ENCODE measurements at regions of chr1 and their contacts with region 1.

Region 1: DNA sequence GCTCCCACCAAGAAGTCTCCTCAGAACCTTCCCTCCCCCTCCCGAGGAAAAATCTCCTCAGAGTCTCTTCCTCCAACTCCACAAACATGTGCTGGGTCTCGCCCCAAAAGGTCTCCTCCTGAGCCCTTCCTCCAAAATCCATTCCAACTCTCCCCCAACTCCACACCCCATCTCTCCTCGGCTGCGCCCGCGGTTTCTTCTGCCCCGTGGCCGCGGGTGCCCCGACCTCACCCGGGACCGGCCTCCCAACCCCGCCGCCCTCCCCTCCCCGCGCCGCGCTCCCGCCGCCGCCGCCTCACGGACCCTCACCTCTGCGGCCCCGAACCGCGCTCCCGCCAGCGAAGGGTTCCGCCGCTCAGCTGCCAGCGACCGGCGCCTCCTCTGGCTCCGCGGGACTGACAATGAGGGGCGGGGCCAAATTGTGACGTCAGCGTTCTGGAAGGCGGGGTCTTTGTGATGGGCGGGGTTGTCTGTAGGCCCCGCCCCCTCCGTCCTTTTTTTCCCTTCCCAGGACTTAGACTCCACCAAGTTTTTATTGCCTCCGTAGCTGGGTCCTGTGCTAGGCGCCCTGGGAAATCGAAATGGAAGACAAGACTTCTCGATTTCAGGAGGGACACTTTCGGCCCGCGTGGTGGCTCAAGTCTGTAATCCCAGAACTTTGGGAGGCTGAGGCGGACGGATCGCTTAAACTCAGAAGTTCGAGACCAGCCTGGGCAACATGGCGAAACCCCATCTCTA is at the start of gene LUZP1:
- DNase-seq: peak; percentile 77 to 87 (median 80)
- H3K4me3 ChIP-seq: peak within 1 kb of the TSS; percentile 72 to 76
- H3K4me3 Mint-ChIP-seq: peak within 1 kb of the TSS; percentile 95 to 98 (median 97)
- H3K27ac ChIP-seq: peak within 1 kb of the TSS; percentile 73
- H3K27ac Mint-ChIP-seq: peak within 1 kb of the TSS; percentile 88 to 98 (median 96)
- H3K4me1 ChIP-seq: peaks cover 23% of the 10 kb centered on the region
- H3K4me1 Mint-ChIP-seq: peaks cover 19 to 51% (median 32%) of the 10 kb centered on the region in 4 donors
- H3K27me3 ChIP-seq: no peaks in the 10 kb centered on the region
- H3K27me3 Mint-ChIP-seq: no peaks in the 10 kb centered on the region
- total RNA-seq, gene LUZP1: 24.7 to 27.9 TPM

Region 2: DNA sequence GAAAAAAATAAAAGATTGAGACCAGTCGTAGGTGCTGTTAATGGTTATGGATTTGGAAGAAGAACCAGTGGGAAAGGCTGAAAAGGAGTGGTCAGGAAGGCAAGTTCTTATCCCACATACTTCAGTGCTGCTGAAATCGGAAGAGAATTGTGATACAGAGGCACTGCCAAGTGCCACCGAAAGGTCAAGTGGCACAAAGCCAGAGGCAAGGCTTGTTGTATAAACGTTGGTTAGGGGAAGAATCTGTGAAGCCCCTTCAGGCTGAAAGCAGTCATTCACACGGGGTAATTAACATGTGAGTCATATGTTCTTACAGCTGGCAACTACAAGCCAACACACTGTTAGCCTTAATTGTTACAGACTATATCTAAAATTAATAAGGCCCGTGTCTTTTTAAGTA is 668.2 kb before region 1 on chr1:
- CTCF ChIA-PET with region 1: no interaction called
- POLR2A ChIA-PET with region 1: no interaction called
- intact Hi-C with region 1: no loop called
- DNase-seq: no peak
- H3K4me3 ChIP-seq: no peak overlapping the region
- H3K4me3 Mint-ChIP-seq: no peak overlapping the region
- H3K27ac ChIP-seq: no peak overlapping the region
- H3K27ac Mint-ChIP-seq: peak overlapping the region in 1 of 7 donors; percentile 61
- H3K4me1 ChIP-seq: no peaks in the 10 kb centered on the region
- H3K4me1 Mint-ChIP-seq: peaks cover 0 to 5% (median 2%) of the 10 kb centered on the region in 4 donors
- H3K27me3 ChIP-seq: no peaks in the 10 kb centered on the region
- H3K27me3 Mint-ChIP-seq: no peaks in the 10 kb centered on the region

Region 3: DNA sequence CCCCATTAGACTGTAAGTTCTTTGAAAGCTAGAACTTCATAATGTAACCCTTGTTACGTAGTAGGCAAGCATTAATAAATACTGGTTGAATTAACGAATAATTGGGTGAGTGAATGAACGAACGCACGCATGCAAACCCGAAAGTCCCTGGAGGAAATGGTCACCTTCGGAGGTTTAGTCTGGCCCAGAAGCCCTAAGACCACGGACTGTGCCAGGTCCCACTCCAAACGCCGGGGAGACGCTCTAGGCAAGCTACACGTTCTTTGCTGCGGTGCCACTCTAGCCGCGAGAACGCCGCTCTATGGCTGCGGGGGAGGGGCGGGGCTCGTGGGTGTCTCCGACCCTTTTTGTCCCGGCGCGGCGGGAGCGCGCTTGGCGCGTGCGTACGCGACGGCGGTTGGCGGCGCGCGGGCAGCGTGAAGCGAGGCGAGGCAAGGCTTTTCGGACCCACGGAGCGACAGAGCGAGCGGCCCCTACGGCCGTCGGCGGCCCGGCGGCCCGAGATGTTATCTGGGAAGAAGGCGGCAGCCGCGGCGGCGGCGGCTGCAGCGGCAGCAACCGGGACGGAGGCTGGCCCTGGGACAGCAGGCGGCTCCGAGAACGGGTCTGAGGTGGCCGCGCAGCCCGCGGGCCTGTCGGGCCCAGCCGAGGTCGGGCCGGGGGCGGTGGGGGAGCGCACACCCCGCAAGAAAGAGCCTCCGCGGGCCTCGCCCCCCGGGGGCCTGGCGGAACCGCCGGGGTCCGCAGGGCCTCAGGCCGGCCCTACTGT is 149.3 kb before region 1 on chr1 and contains the start of gene KDM1A:
- CTCF ChIA-PET with region 1: no interaction called
- POLR2A ChIA-PET with region 1: interaction called, 3 read pairs
- intact Hi-C with region 1: loop called (anchors 5 kb)
- DNase-seq: peak; percentile 90 to 94 (median 92)
- H3K4me3 ChIP-seq: peak within 1 kb of the TSS; percentile 85 to 95
- H3K4me3 Mint-ChIP-seq: peak within 1 kb of the TSS; percentile 96 to 99 (median 97)
- H3K27ac ChIP-seq: peak within 1 kb of the TSS; percentile 61
- H3K27ac Mint-ChIP-seq: peak within 1 kb of the TSS; percentile 73 to 97 (median 94)
- H3K4me1 ChIP-seq: peaks cover 15% of the 10 kb centered on the region
- H3K4me1 Mint-ChIP-seq: peaks cover 28 to 56% (median 40%) of the 10 kb centered on the region in 4 donors
- H3K27me3 ChIP-seq: no peaks in the 10 kb centered on the region
- H3K27me3 Mint-ChIP-seq: no peaks in the 10 kb centered on the region
- total RNA-seq, gene KDM1A: 43.2 TPM

Region 4: DNA sequence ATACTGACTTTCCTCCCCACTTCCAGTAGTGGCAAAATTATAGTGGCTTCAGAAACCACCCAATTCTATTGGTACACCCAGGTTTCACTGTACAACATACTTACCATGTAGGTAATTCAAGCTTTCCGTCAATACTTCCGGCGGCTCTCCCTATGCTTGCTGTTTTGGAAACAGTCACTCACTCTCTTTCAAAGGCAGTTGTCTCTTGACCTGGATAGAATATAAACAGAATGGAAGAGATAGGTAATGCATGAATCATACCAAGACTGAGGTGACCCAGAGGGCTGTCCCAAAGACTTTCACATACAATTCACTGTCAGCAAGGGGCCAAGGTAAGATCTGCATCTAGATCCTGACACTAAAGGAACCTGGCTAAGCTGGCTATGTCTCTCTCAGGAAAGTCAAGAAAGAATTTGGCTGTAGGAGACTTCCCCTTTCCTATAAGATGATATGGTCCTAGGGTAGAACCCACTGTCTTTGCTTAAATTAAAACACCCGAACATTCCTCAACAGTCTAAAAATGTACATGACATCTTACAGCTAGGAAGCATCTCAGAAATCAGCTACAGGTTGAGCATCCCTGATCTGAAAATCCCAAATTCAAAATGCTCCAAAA is 59.6 kb before region 1 on chr1:
- CTCF ChIA-PET with region 1: interaction called, 4 read pairs
- POLR2A ChIA-PET with region 1: interaction called, 21 read pairs
- intact Hi-C with region 1: no loop called
- DNase-seq: peak in 1 of 5 donors; percentile 66
- H3K4me3 ChIP-seq: no peak overlapping the region
- H3K4me3 Mint-ChIP-seq: peak overlapping the region in 5 of 8 donors; percentile 2 to 74 (median 31)
- H3K27ac ChIP-seq: no peak overlapping the region
- H3K27ac Mint-ChIP-seq: peak overlapping the region in 6 of 7 donors; percentile 6 to 88 (median 62)
- H3K4me1 ChIP-seq: peaks cover 55% of the 10 kb centered on the region
- H3K4me1 Mint-ChIP-seq: peaks cover 38 to 73% (median 45%) of the 10 kb centered on the region in 4 donors
- H3K27me3 ChIP-seq: no peaks in the 10 kb centered on the region
- H3K27me3 Mint-ChIP-seq: no peaks in the 10 kb centered on the region

Region 5: DNA sequence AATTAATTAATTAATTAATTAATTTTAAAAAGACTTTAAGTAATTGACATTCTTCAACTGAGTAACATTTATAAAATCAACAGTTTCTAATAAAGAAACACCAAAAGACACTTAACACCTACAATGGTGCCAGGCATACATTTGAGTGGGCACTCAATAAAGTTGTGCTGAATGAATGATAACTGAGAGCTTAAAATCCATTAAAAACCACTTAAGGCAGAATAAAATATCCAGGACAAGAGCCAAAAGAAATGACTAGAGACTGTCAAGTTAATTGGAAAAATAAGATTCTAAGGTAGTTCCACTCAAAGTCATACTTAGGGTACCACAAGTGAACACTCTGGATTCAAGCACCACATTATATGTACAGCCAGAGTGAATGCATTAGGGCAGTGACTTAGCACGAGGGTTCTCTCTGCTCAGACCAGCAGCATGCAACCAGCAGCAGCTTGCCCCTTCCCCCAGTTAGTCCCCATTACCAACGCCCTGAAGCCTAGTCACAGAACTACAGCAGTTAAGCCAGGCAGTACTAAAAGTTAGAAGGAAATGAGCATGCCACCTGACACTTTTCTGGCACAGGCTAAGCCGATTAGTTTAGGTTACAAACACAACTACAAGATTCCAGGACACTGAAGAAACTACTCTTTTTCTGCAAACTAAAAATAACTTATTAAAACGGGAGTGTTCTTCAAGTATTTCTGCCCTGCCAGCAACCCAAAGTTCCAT is 46.4 kb before region 1 on chr1:
- CTCF ChIA-PET with region 1: interaction called, 4 read pairs
- POLR2A ChIA-PET with region 1: interaction called, 40 read pairs
- intact Hi-C with region 1: loop called (anchors 2 kb)
- DNase-seq: no peak
- H3K4me3 ChIP-seq: no peak overlapping the region
- H3K4me3 Mint-ChIP-seq: no peak overlapping the region
- H3K27ac ChIP-seq: no peak overlapping the region
- H3K27ac Mint-ChIP-seq: peak overlapping the region in 4 of 7 donors; percentile 2 to 67 (median 33)
- H3K4me1 ChIP-seq: peaks cover 59% of the 10 kb centered on the region
- H3K4me1 Mint-ChIP-seq: peaks cover 43 to 87% (median 63%) of the 10 kb centered on the region in 4 donors
- H3K27me3 ChIP-seq: no peaks in the 10 kb centered on the region
- H3K27me3 Mint-ChIP-seq: no peaks in the 10 kb centered on the region

Region 6: GRCh38 chr1:23140940-23141596 is 27.6 kb before region 1 on chr1:
- CTCF ChIA-PET with region 1: no interaction called
- POLR2A ChIA-PET with region 1: no interaction called
- intact Hi-C with region 1: no loop called
- DNase-seq: no peak
- H3K4me3 ChIP-seq: no peak overlapping the region
- H3K4me3 Mint-ChIP-seq: no peak overlapping the region
- H3K27ac ChIP-seq: no peak overlapping the region
- H3K27ac Mint-ChIP-seq: peak overlapping the region in 4 of 7 donors; percentile 2 to 85 (median 60)
- H3K4me1 ChIP-seq: no peaks in the 10 kb centered on the region
- H3K4me1 Mint-ChIP-seq: peaks cover 8 to 26% (median 13%) of the 10 kb centered on the region in 4 donors
- H3K27me3 ChIP-seq: no peaks in the 10 kb centered on the region
- H3K27me3 Mint-ChIP-seq: no peaks in the 10 kb centered on the region

Region 7: GRCh38 chr1:23282957-23283356 is 114.3 kb after region 1 on chr1:
- CTCF ChIA-PET with region 1: no interaction called
- POLR2A ChIA-PET with region 1: no interaction called
- intact Hi-C with region 1: no loop called
- DNase-seq: no peak
- H3K4me3 ChIP-seq: no peak overlapping the region
- H3K4me3 Mint-ChIP-seq: no peak overlapping the region
- H3K27ac ChIP-seq: no peak overlapping the region
- H3K27ac Mint-ChIP-seq: peak overlapping the region in 1 of 7 donors; percentile 16
- H3K4me1 ChIP-seq: no peaks in the 10 kb centered on the region
- H3K4me1 Mint-ChIP-seq: peaks cover 0 to 1% (median under 1%) of the 10 kb centered on the region in 4 donors
- H3K27me3 ChIP-seq: no peaks in the 10 kb centered on the region
- H3K27me3 Mint-ChIP-seq: no peaks in the 10 kb centered on the region

Region 8: DNA sequence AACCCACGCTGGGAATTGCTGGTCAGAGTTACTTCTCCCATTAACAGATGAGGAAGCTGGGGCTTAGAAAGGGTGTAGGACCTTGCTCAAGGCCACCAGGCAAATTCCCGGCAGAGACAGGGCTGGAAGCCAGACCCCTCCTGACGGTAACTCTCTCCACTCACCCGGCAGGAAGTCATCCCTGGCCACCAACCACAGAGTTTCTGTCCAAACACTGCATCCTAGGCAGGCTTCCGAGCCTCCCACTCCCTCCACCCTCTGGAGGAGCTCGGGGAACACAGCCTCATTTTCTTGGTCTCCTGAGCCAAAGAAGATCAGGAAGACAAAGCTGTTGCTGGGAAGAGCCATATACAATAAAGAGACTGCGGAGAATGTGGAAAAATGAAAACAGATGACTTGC is 226.1 kb after region 1 on chr1:
- CTCF ChIA-PET with region 1: no interaction called
- POLR2A ChIA-PET with region 1: no interaction called
- intact Hi-C with region 1: no loop called
- DNase-seq: no peak
- H3K4me3 ChIP-seq: no peak overlapping the region
- H3K4me3 Mint-ChIP-seq: no peak overlapping the region
- H3K27ac ChIP-seq: no peak overlapping the region
- H3K27ac Mint-ChIP-seq: peak overlapping the region in 1 of 7 donors; percentile 67
- H3K4me1 ChIP-seq: no peaks in the 10 kb centered on the region
- H3K4me1 Mint-ChIP-seq: peaks cover 0 to 3% (median under 1%) of the 10 kb centered on the region in 4 donors
- H3K27me3 ChIP-seq: no peaks in the 10 kb centered on the region
- H3K27me3 Mint-ChIP-seq: peaks cover 0 to 3% of the 10 kb centered on the region in 2 donors